Posterior vena cava (tissue), 2 donors: ENCODE measurements at regions of chr3 and their contacts with region 1.

Region 1: GRCh38 chr3:177746337-177746933 is 549.2 kb upstream of the TBL1XR1 start:
- DNase-seq: no peak

Region 2: DNA sequence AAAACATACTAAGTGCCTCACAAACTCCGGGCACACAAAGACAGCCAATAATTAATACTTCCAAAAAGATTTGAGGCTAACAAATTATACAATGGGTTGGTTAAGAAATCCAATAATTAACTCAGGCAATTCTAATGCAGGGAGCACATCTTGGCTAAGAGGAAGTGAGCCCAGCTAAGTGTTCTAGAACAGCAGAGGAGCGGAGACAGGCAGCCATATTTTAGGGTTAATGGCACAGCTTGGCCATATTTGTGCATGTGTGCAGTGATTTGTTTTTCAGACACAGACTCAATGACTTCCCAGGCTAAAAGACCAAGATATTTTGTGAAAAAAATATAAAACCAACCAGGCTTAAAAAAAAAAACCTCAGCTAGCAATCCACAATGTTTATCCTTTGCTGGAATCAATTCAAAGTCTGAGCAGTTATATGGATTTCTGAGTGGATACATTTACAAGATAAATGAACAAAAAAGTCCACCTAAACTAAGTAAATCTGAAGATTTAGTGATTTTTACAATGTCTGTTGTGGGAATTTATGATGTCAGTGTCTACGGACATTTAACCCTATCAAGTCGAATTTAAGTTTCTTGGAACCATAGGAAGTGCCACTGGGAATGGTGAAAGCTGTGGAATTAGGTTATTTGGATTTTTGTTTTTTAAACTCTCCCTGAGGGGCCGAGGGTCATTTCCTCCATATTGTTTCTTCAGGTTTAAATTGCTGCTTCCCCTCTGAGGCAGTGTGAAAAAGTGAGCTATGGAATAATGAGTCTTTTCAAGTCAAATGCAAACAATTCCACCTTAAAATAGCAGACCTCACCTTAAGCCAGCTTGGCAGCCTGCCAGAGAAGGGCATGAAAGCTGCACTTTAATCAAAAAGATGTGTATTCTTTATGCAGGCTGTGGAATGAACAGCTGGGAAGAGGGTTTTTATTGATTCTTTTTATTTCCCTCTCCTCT is 135.5 kb before region 1 on chr3:
- intact Hi-C with region 1: no loop called
- DNase-seq: no peak

Region 3: GRCh38 chr3:177705976-177706823 is 40.2 kb before region 1 on chr3:
- intact Hi-C with region 1: loop called in 1 of 2 experiments (anchors 2 kb)
- DNase-seq: peak; percentile 84